Activated CD8-positive, alpha-beta T cell treated with anti-CD3 and anti-CD28 coated beads, Interleukin-2, amount 10 ng/mL, durations not matched to agents 7 days and 5 days (primary cell): ENCODE measurements at regions of chr4 and their contacts with region 1.

Region 1: GRCh38 chr4:7042697-7043464 is at the start of gene TADA2B:
- DNase-seq: peak; percentile 93
- ATAC-seq: peak; percentile 89
- H3K4me3 Mint-ChIP-seq: peak within 1 kb of the TSS; percentile 93
- H3K27ac Mint-ChIP-seq: peak within 1 kb of the TSS; percentile 87
- H3K4me1 Mint-ChIP-seq: peaks cover 44% of the 10 kb centered on the region
- H3K27me3 Mint-ChIP-seq: peaks cover 14% of the 10 kb centered on the region
- total RNA-seq, gene TADA2B: 16.6 to 16.8 TPM

Region 2: DNA sequence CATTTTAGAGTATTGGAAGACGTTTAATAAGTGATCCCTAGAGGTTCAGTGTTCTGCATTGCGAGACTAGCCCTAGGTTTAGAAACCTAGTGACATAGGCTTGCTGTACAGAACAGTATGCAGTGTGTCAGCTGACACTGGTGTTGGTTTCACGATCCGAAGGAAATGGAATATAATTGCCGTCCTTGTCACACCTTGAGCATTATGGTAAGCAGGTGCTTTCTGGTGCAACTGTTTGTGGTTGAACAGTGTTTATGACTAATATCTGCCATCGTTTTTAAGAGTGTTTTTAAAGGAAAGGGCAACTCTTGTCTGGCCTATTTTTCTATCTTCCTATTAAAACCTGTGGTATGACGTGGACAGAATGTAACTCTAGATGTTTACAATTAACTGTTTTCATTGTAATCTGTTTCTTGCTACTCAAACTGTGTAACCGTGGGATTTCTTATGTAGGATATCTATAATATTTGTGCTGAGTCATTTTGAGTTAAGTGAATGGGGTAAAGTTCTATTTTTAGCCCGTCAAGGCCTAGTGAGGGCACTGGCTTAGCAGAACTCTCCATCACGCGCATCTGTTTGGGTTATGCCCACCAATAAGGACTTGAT is 187.1 kb before region 1 on chr4:
- CTCF ChIA-PET with region 1: no interaction called
- POLR2A ChIA-PET with region 1: no interaction called
- DNase-seq: no peak
- ATAC-seq: peak; percentile 68
- H3K4me3 Mint-ChIP-seq: no peak overlapping the region
- H3K27ac Mint-ChIP-seq: peak overlapping the region; percentile 67
- H3K4me1 Mint-ChIP-seq: peaks cover 27% of the 10 kb centered on the region
- H3K27me3 Mint-ChIP-seq: no peaks in the 10 kb centered on the region

Region 3: DNA sequence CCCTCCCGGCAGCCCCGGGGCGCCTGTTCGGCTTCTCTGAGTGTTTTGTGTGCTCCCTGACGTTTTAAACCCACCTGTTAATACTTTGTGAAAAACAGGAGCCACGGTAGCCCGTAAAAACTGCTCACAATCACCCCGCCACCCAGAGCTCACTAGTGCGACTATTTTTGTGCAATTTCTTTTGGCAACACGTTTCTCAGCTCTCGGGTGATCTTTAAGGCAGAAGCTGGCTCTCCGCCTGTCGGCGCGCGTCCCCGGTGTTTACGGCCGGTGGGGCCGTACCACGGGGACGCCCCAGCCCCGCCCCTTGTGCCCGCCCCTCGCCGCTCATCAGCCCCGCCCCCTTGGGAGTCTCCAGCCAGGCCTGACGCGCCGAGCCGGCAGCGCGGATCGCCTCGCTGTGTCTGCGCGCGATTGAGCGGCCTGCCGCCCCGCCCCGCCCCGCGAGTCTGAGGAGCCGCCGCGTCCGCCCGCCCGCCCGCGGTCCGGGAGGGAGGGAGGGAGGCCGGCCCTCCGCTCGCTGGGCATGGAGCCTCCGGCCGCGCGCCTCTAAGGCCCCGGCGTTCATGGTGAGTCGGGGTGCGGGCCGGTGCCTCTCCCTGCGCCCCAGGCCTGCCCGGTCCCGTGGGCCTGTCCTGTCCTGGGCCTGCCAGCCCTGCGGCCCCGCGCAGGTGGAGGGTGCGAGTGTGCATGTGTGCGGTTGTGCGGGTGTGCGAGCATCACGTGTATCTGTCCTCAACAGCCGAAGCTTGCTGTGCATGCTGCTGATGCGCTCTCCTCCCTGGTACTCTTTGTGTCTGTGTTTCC is 55.9 kb before region 1 on chr4:
- CTCF ChIA-PET with region 1: interaction called, 18 read pairs
- POLR2A ChIA-PET with region 1: no interaction called
- DNase-seq: peak; percentile 95
- ATAC-seq: peak; percentile 94
- H3K4me3 Mint-ChIP-seq: peak overlapping the region; percentile 97
- H3K27ac Mint-ChIP-seq: peak overlapping the region; percentile 93
- H3K4me1 Mint-ChIP-seq: peaks cover 67% of the 10 kb centered on the region
- H3K27me3 Mint-ChIP-seq: no peaks in the 10 kb centered on the region

Region 4: DNA sequence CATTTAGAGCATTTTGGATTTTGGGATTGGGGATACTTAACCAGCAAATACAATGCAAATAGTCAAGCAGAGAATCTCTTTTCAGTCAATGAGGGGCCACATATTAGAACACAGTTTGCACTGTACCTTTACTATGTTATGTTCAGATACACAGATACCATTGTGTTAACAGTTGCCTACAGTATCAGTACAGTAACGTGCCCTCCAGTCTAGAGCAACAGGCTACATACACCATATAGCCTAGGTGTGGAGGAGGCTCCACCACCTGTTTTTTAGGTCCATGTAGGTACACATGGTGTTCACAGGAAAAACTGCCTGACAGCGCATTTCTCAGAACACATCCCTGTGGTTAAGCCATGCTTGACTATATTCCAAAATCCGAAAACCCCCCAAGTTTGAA is 15.9 kb after region 1 on chr4:
- CTCF ChIA-PET with region 1: interaction called, 172 read pairs
- POLR2A ChIA-PET with region 1: interaction called, 9 read pairs
- DNase-seq: no peak
- ATAC-seq: no peak
- H3K4me3 Mint-ChIP-seq: no peak overlapping the region
- H3K27ac Mint-ChIP-seq: no peak overlapping the region
- H3K4me1 Mint-ChIP-seq: peaks cover 7% of the 10 kb centered on the region
- H3K27me3 Mint-ChIP-seq: no peaks in the 10 kb centered on the region

Region 5: GRCh38 chr4:7081891-7082471 is 39.1 kb after region 1 on chr4:
- CTCF ChIA-PET with region 1: interaction called, 11 read pairs
- POLR2A ChIA-PET with region 1: no interaction called
- DNase-seq: peak; percentile 56
- ATAC-seq: peak; percentile 65
- H3K4me3 Mint-ChIP-seq: no peak overlapping the region
- H3K27ac Mint-ChIP-seq: no peak overlapping the region
- H3K4me1 Mint-ChIP-seq: peaks cover 2% of the 10 kb centered on the region
- H3K27me3 Mint-ChIP-seq: peaks cover 40% of the 10 kb centered on the region

Region 6: GRCh38 chr4:7101692-7102515 is 59.0 kb after region 1 on chr4:
- CTCF ChIA-PET with region 1: interaction called, 17 read pairs
- POLR2A ChIA-PET with region 1: no interaction called
- DNase-seq: peak; percentile 68
- ATAC-seq: peak; percentile 61
- H3K4me3 Mint-ChIP-seq: peak overlapping the region; percentile 79
- H3K27ac Mint-ChIP-seq: no peak overlapping the region
- H3K4me1 Mint-ChIP-seq: peaks cover 18% of the 10 kb centered on the region
- H3K27me3 Mint-ChIP-seq: peaks cover 12% of the 10 kb centered on the region